Activated CD8-positive, alpha-beta memory T cell treated with anti-CD3 and anti-CD28 coated beads, Interleukin-2, amount 10 ng/mL, durations not matched to agents 7 days and 5 days (primary cell): ENCODE measurements at regions of chr10 and their contacts with region 1.

Region 1: GRCh38 chr10:72331601-72332422 is 22.9 kb downstream of the DNAJB12 start:
- DNase-seq: peak; percentile 96
- ATAC-seq: peak; percentile 67
- H3K4me3 Mint-ChIP-seq: peak overlapping the region; percentile 54
- H3K27ac Mint-ChIP-seq: peak overlapping the region; percentile 92
- H3K4me1 Mint-ChIP-seq: peaks cover 90% of the 10 kb centered on the region
- H3K27me3 Mint-ChIP-seq: no peaks in the 10 kb centered on the region

Region 2: GRCh38 chr10:72126184-72126871 is 205.5 kb before region 1 on chr10:
- CTCF ChIA-PET with region 1: interaction called, 59 read pairs
- DNase-seq: no peak
- ATAC-seq: no peak
- H3K4me3 Mint-ChIP-seq: no peak overlapping the region
- H3K27ac Mint-ChIP-seq: no peak overlapping the region
- H3K4me1 Mint-ChIP-seq: peaks cover 20% of the 10 kb centered on the region
- H3K27me3 Mint-ChIP-seq: no peaks in the 10 kb centered on the region

Region 3: GRCh38 chr10:72215652-72216549 is 115.9 kb before region 1 on chr10 and contains the starts of genes ANAPC16 and ASCC1:
- CTCF ChIA-PET with region 1: interaction called, 127 read pairs
- DNase-seq: peak; percentile 96
- ATAC-seq: peak; percentile 92
- H3K4me3 Mint-ChIP-seq: peak within 1 kb of the TSS; percentile 86
- H3K27ac Mint-ChIP-seq: peak within 1 kb of the TSS; percentile 97
- H3K4me1 Mint-ChIP-seq: peaks cover 48% of the 10 kb centered on the region
- H3K27me3 Mint-ChIP-seq: no peaks in the 10 kb centered on the region
- total RNA-seq, gene ANAPC16: 61.4 to 67.6 TPM
- total RNA-seq, gene ASCC1: 34.9 to 36.8 TPM

Region 4: GRCh38 chr10:72260588-72261322 is 71.1 kb before region 1 on chr10:
- CTCF ChIA-PET with region 1: interaction called, 94 read pairs
- DNase-seq: peak; percentile 97
- ATAC-seq: peak; percentile 78
- H3K4me3 Mint-ChIP-seq: peak overlapping the region; percentile 68
- H3K27ac Mint-ChIP-seq: peak overlapping the region; percentile 98
- H3K4me1 Mint-ChIP-seq: peaks cover 55% of the 10 kb centered on the region
- H3K27me3 Mint-ChIP-seq: no peaks in the 10 kb centered on the region

Region 5: DNA sequence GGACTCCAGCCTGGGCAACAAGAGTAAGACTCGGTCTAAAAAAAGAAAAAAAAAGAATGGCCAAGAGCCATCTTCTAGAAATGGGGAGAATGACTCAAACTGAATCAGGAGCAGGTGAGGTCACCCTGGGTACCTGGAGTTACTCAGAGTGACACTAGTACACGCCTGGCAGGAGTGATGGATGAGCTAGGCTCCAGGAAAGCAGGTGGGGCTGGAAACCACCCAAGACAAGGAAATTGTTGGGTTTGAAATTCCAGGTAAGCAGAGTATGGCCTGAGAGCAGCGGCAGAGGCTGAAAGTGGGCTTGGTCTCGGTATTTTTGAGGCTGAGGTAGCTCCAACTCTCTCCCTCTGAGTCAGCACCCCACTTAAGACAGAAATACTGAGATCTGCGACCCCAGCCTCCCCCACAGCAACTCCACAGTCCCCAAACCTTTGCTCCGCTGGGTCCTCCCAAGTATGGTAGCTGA is 39.6 kb before region 1 on chr10:
- CTCF ChIA-PET with region 1: interaction called, 38 read pairs
- DNase-seq: peak; percentile 77
- ATAC-seq: peak; percentile 42
- H3K4me3 Mint-ChIP-seq: peak overlapping the region; percentile 7
- H3K27ac Mint-ChIP-seq: peak overlapping the region; percentile 92
- H3K4me1 Mint-ChIP-seq: peaks cover 65% of the 10 kb centered on the region
- H3K27me3 Mint-ChIP-seq: no peaks in the 10 kb centered on the region

Region 6: DNA sequence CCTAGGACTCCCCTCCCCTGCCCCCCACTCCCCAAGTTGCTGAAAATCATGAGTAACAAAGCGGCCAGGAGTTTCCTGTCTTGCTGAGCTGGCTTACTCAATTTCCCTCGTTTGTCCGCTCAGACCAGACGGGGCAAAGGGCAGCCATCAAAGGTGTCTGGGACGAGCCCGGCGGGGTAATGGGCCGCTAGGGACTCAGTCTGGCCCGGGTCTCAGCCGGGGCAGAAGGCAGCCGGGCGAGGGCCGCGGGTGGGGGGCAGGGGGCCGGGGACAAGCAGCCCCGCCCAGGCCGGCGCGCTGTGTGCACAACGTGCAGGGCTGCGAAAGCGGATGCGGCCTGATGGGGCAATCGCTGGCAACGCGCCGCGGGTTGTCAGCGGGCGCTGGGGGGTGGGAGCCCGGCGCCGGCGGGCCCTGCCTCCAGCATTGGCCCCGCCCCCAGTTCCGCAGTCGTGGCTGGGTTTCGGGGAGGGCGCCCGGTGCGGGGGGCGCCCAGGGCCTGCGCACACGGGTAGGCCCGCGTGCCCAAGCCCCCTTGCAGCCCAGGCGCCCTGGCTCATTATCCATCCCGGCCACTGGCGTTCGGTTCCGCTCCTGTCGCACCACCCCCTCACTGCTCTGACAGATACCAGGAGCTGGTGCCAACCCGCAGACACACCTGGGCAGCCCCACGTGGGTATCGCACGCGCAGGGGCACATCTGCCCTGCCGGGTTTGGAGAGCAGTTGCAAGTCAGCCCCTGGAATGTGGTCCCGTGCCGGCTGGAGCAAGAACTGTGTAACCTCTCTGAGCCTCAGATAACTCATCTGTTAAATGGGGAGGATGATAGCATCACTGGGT is 12.2 kb before region 1 on chr10:
- CTCF ChIA-PET with region 1: interaction called, 98 read pairs
- DNase-seq: peak; percentile 93
- ATAC-seq: peak; percentile 86
- H3K4me3 Mint-ChIP-seq: peak overlapping the region; percentile 81
- H3K27ac Mint-ChIP-seq: peak overlapping the region; percentile 100
- H3K4me1 Mint-ChIP-seq: peaks cover 79% of the 10 kb centered on the region
- H3K27me3 Mint-ChIP-seq: no peaks in the 10 kb centered on the region

Region 7: GRCh38 chr10:72386916-72387586 is 55.2 kb after region 1 on chr10:
- CTCF ChIA-PET with region 1: no interaction called
- DNase-seq: no peak
- ATAC-seq: no peak
- H3K4me3 Mint-ChIP-seq: no peak overlapping the region
- H3K27ac Mint-ChIP-seq: no peak overlapping the region
- H3K4me1 Mint-ChIP-seq: no peaks in the 10 kb centered on the region
- H3K27me3 Mint-ChIP-seq: no peaks in the 10 kb centered on the region